Activated CD4-positive, alpha-beta memory T cell treated with anti-CD3 and anti-CD28 coated beads for 36 hours (primary cell): ENCODE measurements at regions of chr12 and their contacts with region 1.

Region 1: DNA sequence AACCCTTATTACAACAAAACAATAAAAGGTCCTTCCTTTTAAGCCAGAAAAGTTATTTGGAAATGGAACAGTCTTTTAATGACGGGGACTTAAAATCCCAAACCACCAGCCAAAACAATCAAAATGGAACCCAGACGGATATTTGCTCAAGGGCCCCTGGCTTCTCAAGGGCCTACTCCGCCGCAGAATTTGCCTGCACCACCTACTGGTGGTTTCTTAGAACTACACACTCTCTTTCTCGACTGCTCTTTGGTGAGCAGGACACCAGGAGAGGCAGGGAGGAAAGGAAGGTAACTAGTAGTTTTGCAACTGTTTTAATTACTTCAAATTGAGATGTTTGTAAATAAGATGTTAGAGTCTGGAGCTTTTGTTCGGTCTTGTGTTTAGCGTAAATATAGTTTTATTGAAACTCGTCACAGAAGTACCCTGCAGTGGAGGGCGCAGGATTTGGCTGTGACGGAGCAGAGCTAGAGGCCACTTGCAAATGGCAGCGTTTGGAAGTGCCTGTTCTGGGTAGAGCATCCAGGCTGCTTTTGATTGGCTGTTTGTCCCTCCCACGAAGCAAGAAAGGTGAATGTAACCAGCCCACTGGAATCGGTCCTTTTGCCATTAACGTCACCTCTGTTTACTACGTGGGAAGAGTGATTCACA is 238.5 kb downstream of the CACNA1C start:
- DNase-seq: peak; percentile 56
- H3K4me3 Mint-ChIP-seq: no peak overlapping the region
- H3K27ac Mint-ChIP-seq: no peak overlapping the region
- H3K4me1 Mint-ChIP-seq: peaks cover 6% of the 10 kb centered on the region
- H3K27me3 Mint-ChIP-seq: peaks cover 11% of the 10 kb centered on the region

Region 2: GRCh38 chr12:2057041-2057794 is 234.1 kb before region 1 on chr12:
- CTCF ChIA-PET with region 1: no interaction called
- POLR2A ChIA-PET with region 1: no interaction called
- intact Hi-C with region 1: loop called (anchors 2 kb)
- DNase-seq: peak; percentile 64
- H3K4me3 Mint-ChIP-seq: no peak overlapping the region
- H3K27ac Mint-ChIP-seq: no peak overlapping the region
- H3K4me1 Mint-ChIP-seq: peaks cover 10% of the 10 kb centered on the region
- H3K27me3 Mint-ChIP-seq: peaks cover 34% of the 10 kb centered on the region

Region 3: DNA sequence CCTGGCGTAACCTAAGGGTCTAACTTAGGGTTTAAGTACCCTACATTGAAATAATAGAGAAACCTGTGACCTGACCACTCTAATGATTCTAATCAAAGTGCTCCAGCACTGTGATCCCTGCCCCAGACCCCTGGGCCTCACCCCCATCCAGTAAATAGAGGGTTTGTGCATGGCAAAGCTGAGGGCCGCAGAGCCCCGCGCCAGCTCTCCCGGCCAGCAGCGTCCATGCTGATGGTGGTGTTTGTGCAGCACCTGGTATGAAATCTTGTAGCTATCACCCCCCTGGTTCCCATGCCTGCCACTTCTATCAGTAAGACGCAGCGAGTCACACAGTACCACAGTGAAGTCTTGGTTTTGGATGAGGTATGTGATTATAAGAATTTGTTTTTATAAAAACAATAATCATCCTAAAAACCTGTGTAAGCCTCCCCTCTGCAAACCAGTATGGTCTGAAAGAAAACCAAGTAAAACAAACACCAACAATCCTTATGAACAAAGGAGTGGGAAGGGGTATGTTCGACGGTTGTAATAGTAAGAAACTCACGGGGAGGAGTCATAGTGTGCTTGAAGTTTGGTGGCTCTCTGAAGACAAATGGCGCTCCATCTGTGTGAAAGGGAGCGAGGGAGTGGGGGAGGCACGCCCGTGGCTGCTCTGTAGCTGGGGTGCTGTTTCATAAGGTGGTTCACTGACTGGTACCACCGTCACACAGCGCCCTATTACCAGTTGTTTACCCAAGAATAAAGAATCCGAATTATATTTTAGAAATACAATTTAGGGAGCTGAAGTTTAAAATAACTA is 82.3 kb before region 1 on chr12:
- CTCF ChIA-PET with region 1: no interaction called
- POLR2A ChIA-PET with region 1: no interaction called
- intact Hi-C with region 1: no loop called
- DNase-seq: no peak
- H3K4me3 Mint-ChIP-seq: no peak overlapping the region
- H3K27ac Mint-ChIP-seq: no peak overlapping the region
- H3K4me1 Mint-ChIP-seq: no peaks in the 10 kb centered on the region
- H3K27me3 Mint-ChIP-seq: no peaks in the 10 kb centered on the region